Activated naive CD4-positive, alpha-beta T cell treated with anti-CD3 and anti-CD28 coated beads for 36 hours (primary cell): ENCODE measurements at regions of chr15 and their contacts with region 1.

Region 1: GRCh38 chr15:92625251-92625980 is 30.2 kb downstream of the FAM174B start:
- DNase-seq: peak; percentile 48
- H3K4me3 Mint-ChIP-seq: no peak overlapping the region
- H3K27ac Mint-ChIP-seq: peak overlapping the region; percentile 82
- H3K4me1 Mint-ChIP-seq: peaks cover 24% of the 10 kb centered on the region
- H3K27me3 Mint-ChIP-seq: no peaks in the 10 kb centered on the region

Region 2: DNA sequence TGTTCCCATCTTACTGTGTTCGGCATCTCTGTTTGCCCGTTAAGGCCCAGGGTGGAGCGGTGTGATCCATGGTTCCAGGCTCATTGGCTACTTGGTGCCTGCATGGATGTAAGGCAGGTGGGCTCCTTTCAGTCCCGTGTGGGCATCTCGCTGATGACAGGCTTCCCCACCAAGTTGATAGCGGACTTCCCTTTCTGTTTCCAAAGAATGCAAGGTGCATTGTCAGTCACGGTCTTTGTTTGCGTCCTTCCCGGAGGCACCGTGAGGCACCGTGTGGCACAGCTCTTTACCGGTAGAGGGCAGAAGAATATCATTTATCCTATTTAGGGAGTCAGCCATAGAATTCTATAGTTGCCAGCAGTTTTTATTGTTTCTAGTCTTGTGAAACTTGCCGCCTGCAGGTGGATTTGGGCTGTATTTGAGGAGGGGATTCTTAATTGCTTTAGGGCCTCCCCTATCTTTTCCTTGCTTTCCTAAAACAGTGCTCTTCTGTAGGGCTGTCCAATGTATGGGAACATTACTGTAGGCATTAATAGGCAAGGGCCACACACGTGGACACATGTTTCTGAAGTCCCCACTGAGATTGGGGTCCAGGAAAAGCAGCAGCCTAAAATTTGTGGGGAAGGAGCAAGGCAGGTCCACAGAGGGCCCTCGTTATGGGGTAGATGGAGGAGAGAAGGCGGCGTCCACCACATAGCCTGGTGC is 527.8 kb before region 1 on chr15:
- CTCF ChIA-PET with region 1: no interaction called
- intact Hi-C with region 1: loop called (anchors 10 kb)
- DNase-seq: peak; percentile 74
- H3K4me3 Mint-ChIP-seq: no peak overlapping the region
- H3K27ac Mint-ChIP-seq: peak overlapping the region; percentile 42
- H3K4me1 Mint-ChIP-seq: peaks cover 39% of the 10 kb centered on the region
- H3K27me3 Mint-ChIP-seq: no peaks in the 10 kb centered on the region

Region 3: DNA sequence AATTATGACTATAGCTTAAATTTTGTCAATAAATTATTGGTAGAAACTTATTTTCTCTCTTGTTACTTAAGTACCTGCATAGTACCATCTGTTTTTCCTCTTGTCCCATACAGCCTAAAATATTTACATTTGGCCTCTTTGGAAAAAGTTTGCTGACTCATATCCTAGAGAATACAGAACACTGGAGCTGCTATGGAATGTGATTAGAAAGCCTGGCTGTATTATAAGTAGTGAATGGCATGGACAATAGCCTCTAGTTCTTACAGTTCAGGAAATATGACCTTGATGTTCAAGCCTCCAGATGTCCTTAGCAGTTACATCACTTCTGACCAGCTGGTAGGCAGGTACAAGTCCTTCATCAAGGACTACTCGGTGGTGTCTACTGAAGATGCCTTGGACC is 203.4 kb before region 1 on chr15:
- CTCF ChIA-PET with region 1: no interaction called
- intact Hi-C with region 1: no loop called
- DNase-seq: no peak
- H3K4me3 Mint-ChIP-seq: no peak overlapping the region
- H3K27ac Mint-ChIP-seq: no peak overlapping the region
- H3K4me1 Mint-ChIP-seq: no peaks in the 10 kb centered on the region
- H3K27me3 Mint-ChIP-seq: peaks cover 15% of the 10 kb centered on the region

Region 4: DNA sequence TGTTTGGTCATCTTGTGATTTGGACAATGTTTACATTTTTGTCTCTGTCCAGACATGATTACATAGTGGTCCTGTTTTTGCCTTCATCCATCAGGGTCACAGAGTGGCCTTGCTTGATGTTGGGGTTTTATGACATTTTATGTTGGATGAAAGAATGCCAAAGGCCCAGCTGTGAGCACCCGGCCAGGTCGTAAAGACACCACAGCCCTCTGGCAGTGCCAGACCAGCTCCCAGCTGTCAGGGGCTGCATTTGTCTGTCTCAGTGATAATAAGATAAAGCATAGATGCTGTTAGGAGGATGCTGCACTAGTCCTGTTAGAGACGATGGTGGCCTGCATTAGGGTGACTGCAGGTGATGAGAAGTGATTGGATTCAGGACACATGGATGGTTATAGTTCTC is 87.3 kb before region 1 on chr15:
- CTCF ChIA-PET with region 1: no interaction called
- intact Hi-C with region 1: no loop called
- DNase-seq: no peak
- H3K4me3 Mint-ChIP-seq: no peak overlapping the region
- H3K27ac Mint-ChIP-seq: no peak overlapping the region
- H3K4me1 Mint-ChIP-seq: no peaks in the 10 kb centered on the region
- H3K27me3 Mint-ChIP-seq: peaks cover 5% of the 10 kb centered on the region

Region 5: GRCh38 chr15:92599394-92599970 is 25.9 kb before region 1 on chr15:
- CTCF ChIA-PET with region 1: no interaction called
- intact Hi-C with region 1: loop called (anchors 1 kb)
- DNase-seq: peak; percentile 31
- H3K4me3 Mint-ChIP-seq: no peak overlapping the region
- H3K27ac Mint-ChIP-seq: no peak overlapping the region
- H3K4me1 Mint-ChIP-seq: peaks cover 2% of the 10 kb centered on the region
- H3K27me3 Mint-ChIP-seq: no peaks in the 10 kb centered on the region

Region 6: GRCh38 chr15:92665100-92665555 is 39.7 kb after region 1 on chr15:
- CTCF ChIA-PET with region 1: no interaction called
- intact Hi-C with region 1: no loop called
- DNase-seq: no peak
- H3K4me3 Mint-ChIP-seq: no peak overlapping the region
- H3K27ac Mint-ChIP-seq: no peak overlapping the region
- H3K4me1 Mint-ChIP-seq: peaks cover 15% of the 10 kb centered on the region
- H3K27me3 Mint-ChIP-seq: peaks cover 2% of the 10 kb centered on the region

Region 7: DNA sequence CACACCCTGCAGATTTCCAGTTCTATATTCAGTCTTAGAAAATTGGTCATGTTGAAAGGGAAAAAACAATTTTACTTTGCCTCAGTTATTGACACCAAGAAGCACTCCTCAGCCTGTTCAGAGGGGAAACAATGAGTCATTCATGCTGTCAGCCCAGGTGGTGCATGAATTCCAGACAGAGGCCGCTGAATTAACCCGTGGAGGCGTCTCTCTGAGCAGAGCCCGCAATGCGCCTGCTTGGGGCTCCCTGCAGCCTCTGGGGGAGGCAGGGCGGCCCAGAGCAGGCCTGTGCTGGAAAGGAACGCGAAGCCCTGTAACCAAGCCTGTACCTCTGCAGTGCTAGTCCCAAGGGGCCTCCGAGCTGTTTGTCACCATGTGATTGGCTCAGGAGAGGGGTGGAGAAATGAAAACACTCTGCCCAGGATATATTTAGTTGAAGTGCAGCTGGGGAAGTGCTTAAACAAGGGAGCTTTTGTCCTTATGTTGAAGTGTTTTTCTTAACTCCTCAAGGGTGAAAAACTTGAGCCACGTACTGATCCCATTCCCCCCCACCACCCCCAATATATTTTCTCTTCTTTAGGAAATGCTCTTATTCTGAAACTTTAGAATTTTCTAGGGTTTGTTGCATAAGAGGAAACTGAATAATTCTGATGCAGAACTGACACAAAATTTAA is 206.4 kb after region 1 on chr15:
- CTCF ChIA-PET with region 1: no interaction called
- intact Hi-C with region 1: loop called (anchors 2 kb)
- DNase-seq: peak; percentile 95
- H3K4me3 Mint-ChIP-seq: peak overlapping the region; percentile 64
- H3K27ac Mint-ChIP-seq: peak overlapping the region; percentile 96
- H3K4me1 Mint-ChIP-seq: peaks cover 64% of the 10 kb centered on the region
- H3K27me3 Mint-ChIP-seq: no peaks in the 10 kb centered on the region

Region 8: DNA sequence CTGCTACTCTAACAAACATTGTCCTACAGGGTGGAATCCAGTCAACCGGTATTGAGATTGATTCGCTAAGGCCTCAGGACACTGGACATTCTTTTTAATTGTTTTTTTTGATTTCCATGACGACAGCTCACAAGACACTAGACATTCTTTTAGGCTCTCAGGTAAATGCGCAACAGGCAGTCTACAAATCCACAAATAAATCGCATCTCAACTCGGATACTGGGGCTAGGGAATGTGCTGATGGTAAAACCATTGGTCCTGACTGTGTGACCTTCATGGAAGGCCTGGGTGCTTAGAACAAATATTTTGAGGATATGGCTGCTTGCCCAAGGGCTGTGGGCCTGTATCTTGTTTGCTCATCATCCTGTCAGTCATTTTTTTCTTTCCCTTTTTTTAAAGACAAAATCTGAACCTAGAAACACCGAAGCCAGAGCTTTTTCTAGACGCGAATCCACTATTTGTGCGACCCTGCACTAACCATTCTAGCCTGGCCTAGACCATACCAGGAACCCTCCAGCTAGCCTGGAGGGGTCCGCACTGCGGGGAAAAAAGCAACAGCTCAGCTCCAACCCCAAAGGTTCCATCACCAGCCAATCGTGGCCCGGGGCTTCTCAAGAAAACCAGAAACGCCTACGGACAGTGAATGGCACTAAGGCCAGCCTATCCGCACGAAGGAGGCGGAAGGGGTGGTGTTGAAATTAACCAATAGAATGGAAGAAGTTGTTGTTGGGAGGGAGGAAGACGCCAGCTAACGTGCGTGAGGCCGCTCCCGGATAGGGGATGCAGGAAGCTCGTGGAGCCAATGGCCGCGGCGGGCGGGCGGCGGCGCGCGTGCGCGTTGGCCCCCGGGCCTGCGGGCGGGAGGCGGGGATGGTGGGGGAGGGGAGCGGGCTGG is 256.6 kb after region 1 on chr15:
- CTCF ChIA-PET with region 1: no interaction called
- intact Hi-C with region 1: loop called (anchors 1 kb)
- DNase-seq: peak; percentile 100
- H3K4me3 Mint-ChIP-seq: peak overlapping the region; percentile 95
- H3K27ac Mint-ChIP-seq: peak overlapping the region; percentile 98
- H3K4me1 Mint-ChIP-seq: peaks cover 51% of the 10 kb centered on the region
- H3K27me3 Mint-ChIP-seq: no peaks in the 10 kb centered on the region

Region 9: GRCh38 chr15:92960996-92961681 is 335.7 kb after region 1 on chr15:
- CTCF ChIA-PET with region 1: no interaction called
- intact Hi-C with region 1: no loop called
- DNase-seq: no peak
- H3K4me3 Mint-ChIP-seq: no peak overlapping the region
- H3K27ac Mint-ChIP-seq: peak overlapping the region; percentile 56
- H3K4me1 Mint-ChIP-seq: peaks cover 66% of the 10 kb centered on the region
- H3K27me3 Mint-ChIP-seq: no peaks in the 10 kb centered on the region

Region 10: GRCh38 chr15:94306700-94307650 is 1681.6 kb after region 1 on chr15:
- CTCF ChIA-PET with region 1: no interaction called
- intact Hi-C with region 1: loop called (anchors 10 kb)
- DNase-seq: peak; percentile 49
- H3K4me3 Mint-ChIP-seq: no peak overlapping the region
- H3K27ac Mint-ChIP-seq: peak overlapping the region; percentile 87
- H3K4me1 Mint-ChIP-seq: peaks cover 44% of the 10 kb centered on the region
- H3K27me3 Mint-ChIP-seq: no peaks in the 10 kb centered on the region